ENCODE measurements at regions of chr5 and their contacts with region 1.

Region 1: DNA sequence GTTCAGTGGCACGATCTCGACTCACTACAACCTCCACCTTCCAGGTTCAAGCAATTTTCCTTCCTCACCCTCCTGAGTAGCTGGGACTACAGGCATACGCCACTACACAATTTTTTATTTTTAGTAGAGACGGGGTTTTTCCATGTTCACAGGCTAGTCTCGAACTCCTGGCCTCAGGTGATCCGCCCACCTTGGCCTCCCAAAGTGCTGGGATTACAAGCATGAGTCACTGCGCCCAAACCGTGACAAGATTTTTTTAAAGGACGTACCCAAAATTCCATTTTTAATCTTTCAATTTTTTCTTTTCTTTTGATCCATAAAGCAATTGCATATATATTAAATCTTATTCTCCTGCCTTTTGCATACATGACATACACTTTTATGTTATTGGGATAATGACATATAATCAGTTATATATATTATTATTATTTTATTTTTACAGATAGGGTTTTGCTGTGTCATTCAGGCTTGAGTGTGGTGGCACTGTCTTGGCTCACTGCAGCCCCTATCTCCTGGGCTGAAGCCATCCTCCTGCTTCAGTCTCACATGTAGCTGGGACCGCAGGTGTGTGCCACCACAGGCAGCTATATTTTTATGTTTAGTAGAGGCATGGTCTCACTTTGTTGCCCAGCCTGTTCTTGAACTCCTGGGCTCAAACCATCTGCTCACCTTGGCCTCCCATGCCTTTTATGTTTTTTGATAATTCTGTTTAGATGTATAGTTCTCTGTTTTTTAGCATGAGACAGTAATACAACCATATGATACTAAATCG is 71.9 kb downstream of the RAB24 start:
- DNase-seq: no peak
- H3K4me3 ChIP-seq: no peak overlapping the region
- H3K27ac ChIP-seq: no peak overlapping the region
- H3K4me1 ChIP-seq: peaks cover 0 to 2% (median 0%) of the 10 kb centered on the region in 4 experiments; a peak in 1 of 7 replicates
- H3K27me3 ChIP-seq: no peaks in the 10 kb centered on the region
- CTCF ChIP-seq: no peak
- EP300 ChIP-seq: no peak
- POLR2A ChIP-seq: no peak
- RAD21 ChIP-seq: no peak

Region 2: DNA sequence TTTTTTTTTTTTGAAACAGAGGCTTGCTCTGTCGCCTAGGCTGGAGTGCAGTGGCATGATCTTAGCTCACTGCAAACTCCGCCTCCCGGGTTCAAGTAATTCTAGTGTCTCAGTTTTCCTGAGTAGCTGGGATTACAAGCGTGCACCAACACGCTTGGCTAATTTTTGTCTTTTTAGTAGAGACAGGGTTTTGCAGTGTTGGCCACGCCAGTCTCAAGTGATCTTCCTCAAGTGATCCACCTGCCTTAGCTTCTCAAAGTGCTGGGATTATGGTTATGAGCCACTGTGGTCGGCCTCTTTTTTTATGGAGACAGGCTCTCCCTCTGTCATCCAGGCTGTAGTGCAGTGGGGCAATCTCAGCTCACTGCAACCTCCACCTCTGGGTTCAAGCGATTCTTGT is 11.1 kb before region 1 on chr5:
- CTCF ChIA-PET with region 1: interaction called, 3 read pairs
- POLR2A ChIA-PET with region 1: interaction called, 11 read pairs
- DNase-seq: no peak
- H3K4me3 ChIP-seq: no peak overlapping the region
- H3K27ac ChIP-seq: no peak overlapping the region
- H3K4me1 ChIP-seq: peaks cover 0 to 2% (median 0%) of the 10 kb centered on the region in 4 experiments; a peak in 1 of 7 replicates
- H3K27me3 ChIP-seq: no peaks in the 10 kb centered on the region
- CTCF ChIP-seq: no peak
- EP300 ChIP-seq: no peak
- POLR2A ChIP-seq: no peak
- RAD21 ChIP-seq: no peak

Measured in H1 (cell line).